ENCODE measurements at regions of chr1 and their contacts with region 1.

Region 1: GRCh38 chr1:8015036-8015808 is 10.9 kb downstream of the ERRFI1 start:
- DNase-seq: peak in 3 of 5 donors; percentile 8 to 50 (median 33)
- H3K4me3 ChIP-seq: no peak overlapping the region
- H3K4me3 Mint-ChIP-seq: no peak overlapping the region
- H3K27ac ChIP-seq: no peak overlapping the region
- H3K27ac Mint-ChIP-seq: no peak overlapping the region
- H3K4me1 ChIP-seq: no peaks in the 10 kb centered on the region
- H3K4me1 Mint-ChIP-seq: peaks cover 0 to 7% (median 0%) of the 10 kb centered on the region in 3 donors
- H3K27me3 ChIP-seq: no peaks in the 10 kb centered on the region
- H3K27me3 Mint-ChIP-seq: peaks cover 4 to 30% of the 10 kb centered on the region in 2 donors

Region 2: GRCh38 chr1:8004803-8005554 is 10.2 kb before region 1 on chr1:
- CTCF ChIA-PET with region 1: interaction called, 11 read pairs
- POLR2A ChIA-PET with region 1: no interaction called
- DNase-seq: no peak
- H3K4me3 ChIP-seq: no peak overlapping the region
- H3K4me3 Mint-ChIP-seq: no peak overlapping the region
- H3K27ac ChIP-seq: no peak overlapping the region
- H3K27ac Mint-ChIP-seq: peak overlapping the region in 1 of 8 donors; percentile 19
- H3K4me1 ChIP-seq: no peaks in the 10 kb centered on the region
- H3K4me1 Mint-ChIP-seq: no peaks in the 10 kb centered on the region
- H3K27me3 ChIP-seq: no peaks in the 10 kb centered on the region
- H3K27me3 Mint-ChIP-seq: no peaks in the 10 kb centered on the region

Region 3: DNA sequence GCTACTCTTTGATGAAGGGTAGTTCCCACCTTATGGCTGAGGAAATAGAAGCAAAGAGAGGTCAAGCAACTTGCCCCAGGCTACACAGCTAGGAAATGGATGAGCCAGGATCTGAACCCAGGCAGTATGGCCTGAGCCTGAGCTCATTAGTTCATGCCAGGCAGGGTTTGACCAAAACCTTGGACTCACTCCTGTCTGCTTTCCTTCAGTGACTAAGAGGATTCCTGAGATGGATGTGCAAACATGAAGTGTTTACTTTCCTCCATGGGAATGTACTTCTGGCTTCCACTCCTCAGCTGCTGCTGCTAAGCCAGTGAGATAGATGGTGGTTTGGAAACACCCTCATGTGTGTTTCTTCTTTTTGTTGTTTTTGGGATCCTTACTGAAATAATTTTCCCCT is 46.0 kb after region 1 on chr1:
- CTCF ChIA-PET with region 1: no interaction called
- POLR2A ChIA-PET with region 1: no interaction called
- DNase-seq: no peak
- H3K4me3 ChIP-seq: no peak overlapping the region
- H3K4me3 Mint-ChIP-seq: no peak overlapping the region
- H3K27ac ChIP-seq: no peak overlapping the region
- H3K27ac Mint-ChIP-seq: no peak overlapping the region
- H3K4me1 ChIP-seq: no peaks in the 10 kb centered on the region
- H3K4me1 Mint-ChIP-seq: peaks cover 0 to 2% (median 0%) of the 10 kb centered on the region in 3 donors
- H3K27me3 ChIP-seq: no peaks in the 10 kb centered on the region
- H3K27me3 Mint-ChIP-seq: peaks cover 10 to 21% of the 10 kb centered on the region in 2 donors

Measured in CD8-positive, alpha-beta memory T cell (primary cell).